Activated B cell treated with CpG ODN at 0.5 μM for 24 hours (primary cell): ENCODE measurements at regions of chr6 and their contacts with region 1.

Region 1: GRCh38 chr6:158220786-158221442 is 52.8 kb downstream of the GTF2H5 start:
- DNase-seq: peak; percentile 63
- ATAC-seq: peak; percentile 93
- H3K4me3 Mint-ChIP-seq: no peak overlapping the region
- H3K27ac Mint-ChIP-seq: no peak overlapping the region
- H3K4me1 Mint-ChIP-seq: peaks cover 3% of the 10 kb centered on the region
- H3K27me3 Mint-ChIP-seq: no peaks in the 10 kb centered on the region
- CTCF ChIP-seq: peak; percentile 56

Region 2: GRCh38 chr6:158387036-158387435 is 166.1 kb after region 1 on chr6:
- CTCF ChIA-PET with region 1: interaction called, 40 read pairs
- POLR2A ChIA-PET with region 1: no interaction called
- intact Hi-C with region 1: loop called (anchors 1 kb)
- DNase-seq: no peak
- ATAC-seq: no peak
- H3K4me3 Mint-ChIP-seq: no peak overlapping the region
- H3K27ac Mint-ChIP-seq: no peak overlapping the region
- H3K4me1 Mint-ChIP-seq: peaks cover 6% of the 10 kb centered on the region
- H3K27me3 Mint-ChIP-seq: no peaks in the 10 kb centered on the region
- CTCF ChIP-seq: no peak

Region 3: DNA sequence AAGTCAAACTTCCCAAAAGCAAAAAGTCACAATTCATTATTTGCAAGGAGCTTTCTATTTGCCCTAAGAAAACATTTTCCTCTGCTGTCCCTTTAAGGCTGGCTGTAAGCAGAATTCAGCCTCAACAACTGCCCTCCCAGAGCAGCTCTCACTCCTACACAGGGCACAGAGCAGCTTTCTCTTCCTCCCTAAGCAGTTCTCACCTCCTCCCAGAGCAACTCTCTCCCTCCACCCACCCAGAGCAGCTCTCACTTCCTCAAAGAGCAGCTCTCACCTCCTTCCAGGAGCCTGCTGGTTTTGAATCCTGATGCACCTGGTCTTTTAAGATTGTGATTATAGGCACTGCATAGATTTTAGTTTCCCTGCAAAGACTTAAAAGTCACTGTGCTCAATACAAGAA is 218.3 kb after region 1 on chr6:
- CTCF ChIA-PET with region 1: no interaction called
- POLR2A ChIA-PET with region 1: no interaction called
- intact Hi-C with region 1: no loop called
- DNase-seq: peak; percentile 17
- ATAC-seq: peak; percentile 94
- H3K4me3 Mint-ChIP-seq: no peak overlapping the region
- H3K27ac Mint-ChIP-seq: peak overlapping the region; percentile 35
- H3K4me1 Mint-ChIP-seq: peaks cover 9% of the 10 kb centered on the region
- H3K27me3 Mint-ChIP-seq: no peaks in the 10 kb centered on the region
- CTCF ChIP-seq: no peak

Region 4: GRCh38 chr6:158518191-158519127 is 297.5 kb after region 1 on chr6:
- CTCF ChIA-PET with region 1: interaction called, 10 read pairs
- POLR2A ChIA-PET with region 1: no interaction called
- intact Hi-C with region 1: loop called (anchors 2 kb)
- DNase-seq: peak; percentile 48
- ATAC-seq: peak; percentile 96
- H3K4me3 Mint-ChIP-seq: peak overlapping the region; percentile 81
- H3K27ac Mint-ChIP-seq: no peak overlapping the region
- H3K4me1 Mint-ChIP-seq: peaks cover 12% of the 10 kb centered on the region
- H3K27me3 Mint-ChIP-seq: peaks cover 40% of the 10 kb centered on the region
- CTCF ChIP-seq: no peak

Region 5: DNA sequence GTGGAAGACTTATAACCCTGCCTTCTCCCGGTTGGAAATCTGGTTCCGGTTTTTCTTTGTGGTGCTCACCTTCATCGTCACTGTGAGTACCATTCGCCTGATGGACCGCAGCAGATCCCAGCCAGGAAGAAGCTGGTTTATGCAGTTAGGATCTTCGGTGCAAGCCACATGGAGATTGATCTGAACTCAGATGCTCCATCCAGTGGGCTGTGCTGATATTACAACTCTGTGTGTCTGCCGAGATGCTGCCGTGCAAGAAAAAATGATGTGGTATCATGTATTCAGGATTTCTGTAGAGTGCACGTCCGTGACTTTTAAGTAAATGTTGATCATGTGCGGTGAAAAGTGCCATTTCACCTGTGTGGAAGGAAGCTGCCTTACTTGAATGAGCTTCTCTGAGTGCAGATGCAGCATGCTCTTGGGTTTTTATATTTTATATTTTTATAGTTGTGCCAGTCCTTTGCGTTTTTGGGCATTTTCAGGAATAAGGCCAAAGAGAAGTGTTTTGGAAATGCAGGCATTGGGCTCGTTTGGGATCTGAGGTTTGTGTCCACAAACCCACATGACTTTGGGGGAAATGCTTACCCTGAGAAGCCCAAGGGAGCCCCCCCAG is 384.5 kb after region 1 on chr6:
- CTCF ChIA-PET with region 1: interaction called, 50 read pairs
- POLR2A ChIA-PET with region 1: no interaction called
- intact Hi-C with region 1: loop called (anchors 1 kb)
- DNase-seq: no peak
- ATAC-seq: peak; percentile 71
- H3K4me3 Mint-ChIP-seq: no peak overlapping the region
- H3K27ac Mint-ChIP-seq: no peak overlapping the region
- H3K4me1 Mint-ChIP-seq: no peaks in the 10 kb centered on the region
- H3K27me3 Mint-ChIP-seq: no peaks in the 10 kb centered on the region
- CTCF ChIP-seq: no peak